GM13977 (cell line): ENCODE measurements at regions of chr10 and their contacts with region 1.

Region 1: GRCh38 chr10:45464958-45465567 is 91.0 kb downstream of the ALOX5 start:
- DNase-seq: peak; percentile 80
- CTCF ChIP-seq: peak; percentile 96

Region 2: DNA sequence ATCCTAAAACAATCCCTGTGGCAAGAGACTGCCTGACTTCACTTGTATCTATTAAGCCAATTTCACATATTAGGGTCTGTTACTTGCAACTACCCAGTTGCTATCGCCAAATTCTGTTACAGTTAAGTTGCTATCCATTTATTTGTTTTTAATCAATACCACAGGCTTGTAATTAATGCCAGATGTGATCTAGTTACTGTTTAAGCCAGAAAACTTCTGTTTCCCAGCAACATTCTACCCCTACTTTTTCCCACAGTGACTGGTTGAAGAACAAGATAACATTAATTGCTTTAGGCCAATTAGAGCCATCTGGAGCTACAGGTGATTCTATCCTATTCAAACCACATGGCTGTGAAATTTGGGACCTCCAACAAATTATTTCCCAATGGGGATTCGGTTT is 40.2 kb after region 1 on chr10:
- in situ Hi-C with region 1: no loop called
- DNase-seq: no peak
- CTCF ChIP-seq: no peak

Region 3: GRCh38 chr10:45602082-45602730 is 137.1 kb after region 1 on chr10:
- in situ Hi-C with region 1: no loop called
- DNase-seq: no peak
- CTCF ChIP-seq: no peak

Region 4: GRCh38 chr10:45672181-45673073 is 207.4 kb after region 1 on chr10 and contains the start of gene ZFAND4:
- in situ Hi-C with region 1: loop called (anchors 10 kb)
- DNase-seq: peak; percentile 98
- CTCF ChIP-seq: peak; percentile 92